ENCODE measurements at regions of chr2 and their contacts with region 1.

Region 1: DNA sequence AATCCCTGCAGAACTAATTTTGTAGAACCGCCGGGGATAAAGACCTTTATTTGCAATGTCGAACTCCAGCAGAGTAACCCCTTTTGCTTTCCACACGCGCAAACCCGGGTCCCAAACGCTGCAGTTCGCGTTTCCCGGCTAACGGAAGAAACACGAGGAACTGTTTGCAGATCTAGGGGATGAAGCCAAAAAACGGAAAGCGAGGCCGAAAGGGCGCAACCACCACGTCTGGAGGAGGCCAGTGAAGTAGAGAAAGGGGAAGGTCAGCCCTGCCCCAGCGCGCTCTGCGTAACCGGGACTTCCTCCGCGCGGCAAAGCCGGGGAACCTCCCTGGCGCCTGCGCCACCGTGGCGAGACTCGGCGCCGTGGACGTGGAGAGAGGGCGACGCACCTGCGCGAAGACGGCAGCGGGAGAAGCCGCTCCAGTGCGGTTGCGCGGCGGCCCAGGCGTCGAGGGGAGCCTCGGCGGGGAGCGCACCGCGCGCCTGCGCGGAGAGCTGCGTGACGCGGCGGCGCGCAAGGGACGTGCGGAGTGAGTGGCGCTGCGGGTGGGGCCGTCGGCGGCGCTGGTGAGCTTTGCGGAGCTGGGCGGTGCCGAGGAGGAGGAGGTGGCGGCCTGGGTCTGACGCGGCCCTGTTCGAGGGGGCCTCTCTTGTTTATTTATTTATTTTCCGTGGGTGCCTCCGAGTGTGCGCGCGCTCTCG is at the start of gene PPP1CB:
- DNase-seq: peak; percentile 96 to 99 (median 99)
- H3K4me3 ChIP-seq: peak within 1 kb of the TSS; percentile 74 to 97
- H3K4me3 Mint-ChIP-seq: peak within 1 kb of the TSS; percentile 90 to 99 (median 96)
- H3K27ac ChIP-seq: peak within 1 kb of the TSS; percentile 94
- H3K27ac Mint-ChIP-seq: peak within 1 kb of the TSS; percentile 97 to 99 (median 99)
- H3K4me1 ChIP-seq: peaks cover 59% of the 10 kb centered on the region
- H3K4me1 Mint-ChIP-seq: peaks cover 38 to 82% (median 57%) of the 10 kb centered on the region in 4 donors
- H3K27me3 ChIP-seq: no peaks in the 10 kb centered on the region
- H3K27me3 Mint-ChIP-seq: no peaks in the 10 kb centered on the region
- total RNA-seq, gene PPP1CB: 225 to 231 TPM

Region 2: DNA sequence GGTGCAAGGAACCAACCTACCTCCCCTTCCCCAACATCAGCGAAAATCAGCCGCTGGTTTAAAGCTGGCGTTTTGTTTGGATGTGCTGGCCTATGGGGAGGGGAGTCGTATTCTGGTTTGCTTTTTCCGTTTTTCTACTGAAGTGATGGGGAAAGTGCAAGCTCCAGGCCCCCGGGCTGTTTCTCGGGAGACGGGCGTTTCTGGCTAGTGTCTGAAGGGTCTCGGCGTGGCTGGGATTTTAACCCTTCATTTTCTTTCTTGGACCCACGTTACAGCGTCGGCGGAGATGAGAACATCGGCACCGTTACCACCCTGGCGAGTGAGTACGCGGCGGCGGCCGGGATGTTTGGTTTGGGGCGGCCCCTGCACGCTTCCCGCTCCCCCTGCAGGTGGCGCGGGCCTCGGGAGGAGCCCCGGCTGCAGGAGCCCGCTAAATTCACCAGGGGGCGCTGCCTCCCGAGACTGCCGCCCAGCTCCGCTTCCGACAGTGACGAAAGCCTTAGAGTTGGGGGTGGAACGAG is 184.8 kb before region 1 on chr2:
- CTCF ChIA-PET with region 1: interaction called, 52 read pairs
- POLR2A ChIA-PET with region 1: interaction called, 5 read pairs
- intact Hi-C with region 1: loop called (anchors 1 kb)
- DNase-seq: peak; percentile 84 to 92 (median 87)
- H3K4me3 ChIP-seq: peak overlapping the region; percentile 17 to 49
- H3K4me3 Mint-ChIP-seq: peak overlapping the region; percentile 90 to 97 (median 94)
- H3K27ac ChIP-seq: peak overlapping the region; percentile 49
- H3K27ac Mint-ChIP-seq: peak overlapping the region; percentile 90 to 97 (median 95)
- H3K4me1 ChIP-seq: peaks cover 11% of the 10 kb centered on the region
- H3K4me1 Mint-ChIP-seq: peaks cover 10 to 30% (median 18%) of the 10 kb centered on the region in 4 donors
- H3K27me3 ChIP-seq: no peaks in the 10 kb centered on the region
- H3K27me3 Mint-ChIP-seq: peaks cover 0 to 2% of the 10 kb centered on the region in 2 donors

Region 3: GRCh38 chr2:28610583-28611201 is 140.7 kb before region 1 on chr2:
- CTCF ChIA-PET with region 1: interaction called, 6 read pairs
- POLR2A ChIA-PET with region 1: interaction called, 33 read pairs
- intact Hi-C with region 1: no loop called
- DNase-seq: no peak
- H3K4me3 ChIP-seq: no peak overlapping the region
- H3K4me3 Mint-ChIP-seq: peak overlapping the region in 1 of 8 donors; percentile 8
- H3K27ac ChIP-seq: no peak overlapping the region
- H3K27ac Mint-ChIP-seq: peak overlapping the region in 6 of 7 donors; percentile 34 to 73 (median 48)
- H3K4me1 ChIP-seq: peaks cover 37% of the 10 kb centered on the region
- H3K4me1 Mint-ChIP-seq: peaks cover 5 to 32% (median 21%) of the 10 kb centered on the region in 4 donors
- H3K27me3 ChIP-seq: no peaks in the 10 kb centered on the region
- H3K27me3 Mint-ChIP-seq: no peaks in the 10 kb centered on the region

Region 4: DNA sequence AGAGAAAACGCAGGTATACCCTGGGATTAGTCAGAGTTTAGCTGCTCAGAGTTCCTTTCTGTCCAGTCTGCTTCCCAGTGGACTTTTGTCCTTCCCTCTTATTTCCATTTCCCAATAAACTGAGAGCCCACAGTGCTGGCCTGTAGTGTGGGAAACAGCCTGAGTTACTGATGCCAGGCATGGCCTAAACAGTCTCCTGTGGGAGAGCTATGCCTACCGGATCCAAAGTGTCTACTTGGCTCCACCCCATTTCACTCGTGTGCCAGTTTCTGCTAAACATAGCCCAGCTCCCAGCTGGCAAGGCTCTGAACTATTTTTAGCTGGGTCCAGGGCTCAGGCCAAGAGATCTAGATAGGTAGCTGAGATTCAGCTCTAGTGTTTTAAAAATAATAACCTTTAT is 15.4 kb before region 1 on chr2:
- CTCF ChIA-PET with region 1: interaction called, 3 read pairs
- POLR2A ChIA-PET with region 1: interaction called, 14 read pairs
- intact Hi-C with region 1: no loop called
- DNase-seq: no peak
- H3K4me3 ChIP-seq: no peak overlapping the region
- H3K4me3 Mint-ChIP-seq: no peak overlapping the region
- H3K27ac ChIP-seq: no peak overlapping the region
- H3K27ac Mint-ChIP-seq: no peak overlapping the region
- H3K4me1 ChIP-seq: no peaks in the 10 kb centered on the region
- H3K4me1 Mint-ChIP-seq: no peaks in the 10 kb centered on the region
- H3K27me3 ChIP-seq: no peaks in the 10 kb centered on the region
- H3K27me3 Mint-ChIP-seq: peaks cover 0 to 2% of the 10 kb centered on the region in 2 donors

Region 5: GRCh38 chr2:28810384-28811285 is 59.2 kb after region 1 on chr2 and contains the start of gene SPDYA:
- CTCF ChIA-PET with region 1: no interaction called
- POLR2A ChIA-PET with region 1: no interaction called
- intact Hi-C with region 1: loop called (anchors 2 kb)
- DNase-seq: peak; percentile 76 to 81 (median 79)
- H3K4me3 ChIP-seq: peak within 1 kb of the TSS in 1 of 2 donors; percentile 60
- H3K4me3 Mint-ChIP-seq: peak within 1 kb of the TSS; percentile 79 to 91 (median 84)
- H3K27ac ChIP-seq: peak within 1 kb of the TSS; percentile 41
- H3K27ac Mint-ChIP-seq: peak within 1 kb of the TSS; percentile 73 to 88 (median 84)
- H3K4me1 ChIP-seq: peaks cover 13% of the 10 kb centered on the region
- H3K4me1 Mint-ChIP-seq: peaks cover 5 to 16% (median 11%) of the 10 kb centered on the region in 4 donors
- H3K27me3 ChIP-seq: no peaks in the 10 kb centered on the region
- H3K27me3 Mint-ChIP-seq: no peaks in the 10 kb centered on the region
- total RNA-seq, gene SPDYA: 4.5 to 4.9 TPM

Region 6: GRCh38 chr2:28934769-28935168 is 183.4 kb after region 1 on chr2:
- CTCF ChIA-PET with region 1: no interaction called
- POLR2A ChIA-PET with region 1: no interaction called
- intact Hi-C with region 1: no loop called
- DNase-seq: no peak
- H3K4me3 ChIP-seq: no peak overlapping the region
- H3K4me3 Mint-ChIP-seq: no peak overlapping the region
- H3K27ac ChIP-seq: no peak overlapping the region
- H3K27ac Mint-ChIP-seq: peak overlapping the region in 1 of 7 donors; percentile 35
- H3K4me1 ChIP-seq: no peaks in the 10 kb centered on the region
- H3K4me1 Mint-ChIP-seq: peaks cover 0 to 1% (median 0%) of the 10 kb centered on the region in 4 donors
- H3K27me3 ChIP-seq: no peaks in the 10 kb centered on the region
- H3K27me3 Mint-ChIP-seq: no peaks in the 10 kb centered on the region

Region 7: DNA sequence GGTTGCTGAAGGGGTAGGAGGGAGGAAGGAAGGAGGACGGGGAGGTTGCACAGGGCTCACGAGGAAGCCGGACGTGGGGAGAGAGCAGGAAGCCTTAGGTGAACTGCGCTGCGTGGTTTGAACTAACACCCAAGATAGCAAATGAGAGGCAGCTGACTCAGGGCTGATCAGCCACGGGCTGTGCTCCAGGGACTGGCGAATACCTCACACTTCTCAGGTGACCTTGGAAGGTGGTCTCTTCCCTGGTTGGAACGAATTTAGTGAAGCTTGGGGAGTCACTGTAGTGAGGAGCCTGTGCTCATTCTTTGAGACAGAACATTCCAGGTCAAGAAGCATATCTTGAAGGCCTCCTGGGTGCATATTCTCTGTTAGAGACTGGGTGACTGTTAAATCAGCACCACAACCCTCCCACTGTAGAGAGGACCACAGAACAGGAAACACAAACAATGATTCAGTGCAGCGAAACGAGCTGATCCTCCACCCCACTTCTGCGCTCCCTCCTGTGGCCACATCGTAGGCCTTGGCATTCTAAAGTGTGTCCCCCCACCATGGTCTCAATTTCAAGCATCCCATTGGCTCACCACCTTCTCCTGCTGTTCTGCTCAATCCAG is 263.5 kb after region 1 on chr2:
- CTCF ChIA-PET with region 1: no interaction called
- POLR2A ChIA-PET with region 1: no interaction called
- intact Hi-C with region 1: loop called (anchors 5 kb)
- DNase-seq: peak; percentile 75 to 88 (median 80)
- H3K4me3 ChIP-seq: peak overlapping the region; percentile 25 to 48
- H3K4me3 Mint-ChIP-seq: peak overlapping the region; percentile 83 to 95 (median 88)
- H3K27ac ChIP-seq: peak overlapping the region; percentile 86
- H3K27ac Mint-ChIP-seq: peak overlapping the region; percentile 99 to 100 (median 100)
- H3K4me1 ChIP-seq: peaks cover 78% of the 10 kb centered on the region
- H3K4me1 Mint-ChIP-seq: peaks cover 62 to 84% (median 72%) of the 10 kb centered on the region in 4 donors
- H3K27me3 ChIP-seq: no peaks in the 10 kb centered on the region
- H3K27me3 Mint-ChIP-seq: no peaks in the 10 kb centered on the region